ENCODE measurements at regions of chr1 and their contacts with region 1.

Region 1: DNA sequence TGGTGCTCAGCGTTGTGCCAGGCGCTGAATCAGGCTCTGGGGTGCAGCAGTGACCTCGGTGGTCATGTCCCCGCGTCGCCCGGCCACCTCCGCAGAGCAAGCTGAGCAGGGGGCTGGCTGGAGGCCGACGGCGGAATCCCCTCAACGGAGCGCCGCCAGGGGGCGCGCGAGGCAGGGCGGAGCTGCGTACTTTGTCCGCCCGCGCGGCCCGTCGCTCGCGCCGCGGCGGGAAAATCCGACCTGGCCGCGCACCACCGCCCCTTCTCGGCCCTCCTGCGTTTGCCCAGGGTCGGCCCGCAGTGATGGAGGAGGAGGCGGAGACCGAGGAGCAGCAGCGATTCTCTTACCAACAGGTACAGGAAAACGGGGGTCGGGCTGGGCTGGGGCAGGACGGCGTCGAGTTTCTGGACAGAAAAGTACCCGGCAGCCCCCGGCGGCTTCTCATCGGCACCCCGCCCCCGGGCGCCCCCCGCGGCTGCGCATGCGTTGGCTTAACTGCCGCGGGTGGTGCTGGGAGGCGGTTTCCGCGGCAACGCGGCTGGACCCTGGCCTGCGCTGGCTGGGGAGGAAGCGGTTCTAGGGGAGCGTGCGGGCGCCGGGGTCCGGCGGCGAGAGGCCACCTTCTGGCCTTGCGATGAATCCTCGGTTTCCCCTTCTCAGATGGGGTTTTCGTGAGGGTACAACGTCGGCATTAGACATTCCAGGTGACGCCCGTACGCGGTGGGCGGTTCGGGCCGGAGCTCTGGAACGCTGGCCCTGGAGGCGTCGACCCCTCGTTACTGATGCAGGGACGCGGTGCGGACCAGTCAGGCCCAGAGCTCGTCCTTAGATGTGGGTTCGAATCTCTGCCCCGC is at the start of gene CENPS:
- DNase-seq: peak; percentile 68 to 96 (median 91)
- ATAC-seq: peak; percentile 93
- H3K4me3 ChIP-seq: peak within 1 kb of the TSS; percentile 97
- H3K4me3 Mint-ChIP-seq: peak within 1 kb of the TSS; percentile 82 to 98 (median 88)
- H3K27ac ChIP-seq: peak within 1 kb of the TSS; percentile 88
- H3K27ac Mint-ChIP-seq: peak within 1 kb of the TSS; percentile 66 to 96 (median 92)
- H3K4me1 ChIP-seq: peaks cover 3 to 8% of the 10 kb centered on the region in 2 donors
- H3K4me1 Mint-ChIP-seq: peaks cover 0 to 26% (median 20%) of the 10 kb centered on the region in 7 donors
- H3K27me3 ChIP-seq: no peaks in the 10 kb centered on the region
- H3K27me3 Mint-ChIP-seq: peaks cover 0 to 2% (median 0%) of the 10 kb centered on the region in 5 donors
- total RNA-seq, gene CENPS: 5.4 to 13.0 (median 9.8) TPM

Region 2: GRCh38 chr1:9874959-9875635 is 555.3 kb before region 1 on chr1:
- CTCF ChIA-PET with region 1: interaction called, 13 read pairs
- POLR2A ChIA-PET with region 1: no interaction called
- intact Hi-C with region 1: loop called (anchors 1 kb)
- DNase-seq: peak; percentile 54 to 73 (median 64)
- ATAC-seq: peak; percentile 93
- H3K4me3 ChIP-seq: no peak overlapping the region
- H3K4me3 Mint-ChIP-seq: peak overlapping the region in 1 of 10 donors; percentile 14
- H3K27ac ChIP-seq: no peak overlapping the region
- H3K27ac Mint-ChIP-seq: peak overlapping the region in 3 of 9 donors; percentile 16 to 23 (median 16)
- H3K4me1 ChIP-seq: no peaks in the 10 kb centered on the region
- H3K4me1 Mint-ChIP-seq: peaks cover 6 to 9% (median 7%) of the 10 kb centered on the region in 7 donors
- H3K27me3 ChIP-seq: no peaks in the 10 kb centered on the region
- H3K27me3 Mint-ChIP-seq: no peaks in the 10 kb centered on the region

Region 3: GRCh38 chr1:9942939-9943788 is 487.3 kb before region 1 on chr1 and contains the starts of genes LZIC and NMNAT1:
- CTCF ChIA-PET with region 1: interaction called, 3 read pairs
- POLR2A ChIA-PET with region 1: no interaction called
- intact Hi-C with region 1: loop called in 1 of 2 experiments (anchors 1 kb)
- DNase-seq: peak; percentile 71 to 92 (median 82)
- ATAC-seq: peak; percentile 98
- H3K4me3 ChIP-seq: peak within 1 kb of the TSS; percentile 71
- H3K4me3 Mint-ChIP-seq: peak within 1 kb of the TSS; percentile 91 to 98 (median 97)
- H3K27ac ChIP-seq: peak within 1 kb of the TSS; percentile 92
- H3K27ac Mint-ChIP-seq: peak within 1 kb of the TSS; percentile 93 to 99 (median 97)
- H3K4me1 ChIP-seq: peaks cover 0 to 9% of the 10 kb centered on the region in 2 donors
- H3K4me1 Mint-ChIP-seq: peaks cover 17 to 33% (median 26%) of the 10 kb centered on the region in 7 donors
- H3K27me3 ChIP-seq: no peaks in the 10 kb centered on the region
- H3K27me3 Mint-ChIP-seq: no peaks in the 10 kb centered on the region
- total RNA-seq, gene LZIC: 18.0 to 35.1 (median 31.0) TPM
- total RNA-seq, gene NMNAT1: 2.7 to 8.3 (median 7.5) TPM

Region 4: DNA sequence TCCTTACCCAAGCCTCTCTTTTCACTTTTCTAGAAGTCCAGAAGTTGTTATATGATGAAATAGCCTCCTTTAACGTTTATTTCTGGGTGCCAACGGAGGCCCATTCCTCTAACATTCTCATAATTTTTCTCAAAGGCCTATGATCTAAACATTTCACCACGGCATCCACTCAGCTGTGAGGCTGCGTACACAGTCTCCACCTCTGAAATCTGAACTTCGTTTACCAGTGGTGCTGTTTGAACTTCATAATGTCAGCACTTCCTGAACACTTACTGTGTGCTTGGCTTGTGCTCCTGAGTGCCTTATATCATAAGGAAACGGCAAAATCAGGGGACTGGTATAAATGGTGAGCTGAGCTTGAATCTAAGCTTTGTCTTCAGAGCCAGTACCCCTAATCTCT is 445.4 kb before region 1 on chr1:
- CTCF ChIA-PET with region 1: no interaction called
- POLR2A ChIA-PET with region 1: no interaction called
- intact Hi-C with region 1: no loop called
- DNase-seq: no peak
- ATAC-seq: no peak
- H3K4me3 ChIP-seq: no peak overlapping the region
- H3K4me3 Mint-ChIP-seq: no peak overlapping the region
- H3K27ac ChIP-seq: no peak overlapping the region
- H3K27ac Mint-ChIP-seq: no peak overlapping the region
- H3K4me1 ChIP-seq: no peaks in the 10 kb centered on the region
- H3K4me1 Mint-ChIP-seq: no peaks in the 10 kb centered on the region
- H3K27me3 ChIP-seq: no peaks in the 10 kb centered on the region
- H3K27me3 Mint-ChIP-seq: no peaks in the 10 kb centered on the region

Region 5: DNA sequence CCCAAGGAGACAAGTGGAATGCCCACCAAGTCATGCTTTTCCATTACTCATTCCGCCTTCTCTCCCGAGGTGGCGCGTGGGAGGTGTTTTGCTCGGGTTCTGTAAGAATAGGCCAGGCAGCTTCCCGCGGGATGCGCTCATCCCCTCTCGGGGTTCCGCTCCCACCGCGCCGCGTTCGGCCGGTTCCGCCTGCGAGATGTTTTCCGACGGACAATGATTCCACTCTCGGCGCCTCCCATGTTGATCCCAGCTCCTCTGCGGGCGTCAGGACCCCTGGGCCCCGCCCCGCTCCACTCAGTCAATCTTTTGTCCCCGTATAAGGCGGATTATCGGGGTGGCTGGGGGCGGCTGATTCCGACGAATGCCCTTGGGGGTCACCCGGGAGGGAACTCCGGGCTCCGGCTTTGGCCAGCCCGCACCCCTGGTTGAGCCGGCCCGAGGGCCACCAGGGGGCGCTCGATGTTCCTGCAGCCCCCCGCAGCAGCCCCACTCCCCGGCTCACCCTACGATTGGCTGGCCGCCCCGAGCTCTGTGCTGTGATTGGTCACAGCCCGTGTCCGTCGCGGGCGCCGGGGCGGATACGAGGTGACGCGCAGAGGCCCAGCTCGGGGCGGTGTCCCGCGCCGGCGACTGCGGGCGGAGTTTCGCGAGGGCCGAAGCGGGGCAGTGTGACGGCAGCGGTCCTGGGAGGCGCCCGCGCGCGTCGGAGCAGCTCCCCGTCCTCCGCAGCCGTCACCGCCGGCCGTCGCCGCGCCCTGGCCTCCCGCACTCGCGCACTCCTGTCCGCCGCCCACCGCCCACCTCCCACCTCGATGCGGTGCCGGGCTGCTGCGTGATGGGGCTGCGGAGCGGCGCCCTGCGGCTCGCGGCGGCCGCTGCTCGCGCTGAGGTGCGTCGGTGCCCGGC is 220.3 kb before region 1 on chr1 and contains the start of gene KIF1B:
- CTCF ChIA-PET with region 1: interaction called, 26 read pairs
- POLR2A ChIA-PET with region 1: interaction called, 10 read pairs
- intact Hi-C with region 1: loop called (anchors 1 kb)
- DNase-seq: peak; percentile 93 to 98 (median 95)
- ATAC-seq: peak; percentile 99
- H3K4me3 ChIP-seq: peak within 1 kb of the TSS; percentile 94
- H3K4me3 Mint-ChIP-seq: peak within 1 kb of the TSS; percentile 83 to 93 (median 90)
- H3K27ac ChIP-seq: peak within 1 kb of the TSS; percentile 75
- H3K27ac Mint-ChIP-seq: peak within 1 kb of the TSS; percentile 51 to 82 (median 67)
- H3K4me1 ChIP-seq: peaks cover 5 to 15% of the 10 kb centered on the region in 2 donors
- H3K4me1 Mint-ChIP-seq: peaks cover 14 to 37% (median 21%) of the 10 kb centered on the region in 7 donors
- H3K27me3 ChIP-seq: peaks cover 0 to 4% of the 10 kb centered on the region in 2 donors
- H3K27me3 Mint-ChIP-seq: peaks cover 0 to 8% (median 0%) of the 10 kb centered on the region in 5 donors
- total RNA-seq, gene KIF1B: 10.4 to 21.6 (median 13.4) TPM

Region 6: GRCh38 chr1:10378081-10378841 is 52.2 kb before region 1 on chr1:
- CTCF ChIA-PET with region 1: interaction called, 10 read pairs
- POLR2A ChIA-PET with region 1: no interaction called
- intact Hi-C with region 1: loop called in 1 of 2 experiments (anchors 1 kb)
- DNase-seq: no peak
- ATAC-seq: peak; percentile 83
- H3K4me3 ChIP-seq: no peak overlapping the region
- H3K4me3 Mint-ChIP-seq: no peak overlapping the region
- H3K27ac ChIP-seq: no peak overlapping the region
- H3K27ac Mint-ChIP-seq: peak overlapping the region in 1 of 9 donors; percentile 13
- H3K4me1 ChIP-seq: no peaks in the 10 kb centered on the region
- H3K4me1 Mint-ChIP-seq: peaks cover 0 to 5% (median 0%) of the 10 kb centered on the region in 7 donors
- H3K27me3 ChIP-seq: no peaks in the 10 kb centered on the region
- H3K27me3 Mint-ChIP-seq: no peaks in the 10 kb centered on the region

Region 7: DNA sequence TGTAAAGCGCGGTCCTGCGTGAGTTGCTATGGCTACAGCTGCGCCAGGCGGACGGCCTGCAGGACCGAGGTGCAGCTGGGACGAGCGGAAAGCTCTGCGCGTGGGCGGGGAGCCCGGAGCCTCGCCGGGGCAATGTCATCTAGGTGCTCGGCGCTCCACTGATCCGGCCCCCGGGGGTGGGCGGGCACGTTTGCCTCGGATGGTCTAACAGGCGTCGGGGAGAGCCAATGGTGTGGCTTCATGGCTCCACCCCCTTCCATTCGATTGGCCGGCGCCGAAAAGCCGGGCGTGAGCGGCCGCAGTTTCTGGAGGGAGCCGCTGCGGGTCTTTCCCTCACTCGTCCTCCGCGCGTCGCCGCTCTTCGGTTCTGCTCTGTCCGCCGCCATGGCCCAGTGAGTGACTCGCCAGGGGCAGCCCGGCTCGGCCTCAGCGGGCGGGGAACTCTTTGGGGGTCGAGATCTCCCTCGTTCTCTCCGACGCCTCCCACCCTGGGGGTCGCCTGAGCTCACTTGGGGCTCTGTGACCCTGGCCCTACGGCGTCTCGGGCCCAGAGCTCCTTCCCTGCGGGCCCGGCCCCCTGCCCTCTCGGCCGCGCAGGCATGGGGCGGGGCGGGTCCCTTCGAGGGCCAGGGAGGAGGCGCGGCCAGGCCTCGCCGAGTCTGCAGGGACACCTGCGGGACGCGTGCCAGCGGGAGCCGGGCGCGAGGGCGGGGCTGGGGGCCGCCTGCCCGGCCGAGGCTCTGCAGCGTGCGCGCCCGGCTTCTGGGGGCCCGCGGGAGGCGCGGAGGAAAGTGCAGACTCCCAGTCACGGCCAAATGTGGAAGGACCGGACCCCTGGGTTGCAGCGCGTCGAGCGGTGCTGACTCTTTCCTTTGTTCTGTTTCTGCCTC is 31.5 kb before region 1 on chr1 and contains the start of gene PGD:
- CTCF ChIA-PET with region 1: interaction called, 4 read pairs
- POLR2A ChIA-PET with region 1: interaction called, 4 read pairs
- intact Hi-C with region 1: loop called (anchors 1 kb)
- DNase-seq: peak; percentile 87 to 98 (median 94)
- ATAC-seq: peak; percentile 99
- H3K4me3 ChIP-seq: peak within 1 kb of the TSS; percentile 95
- H3K4me3 Mint-ChIP-seq: peak within 1 kb of the TSS; percentile 87 to 97 (median 96)
- H3K27ac ChIP-seq: peak within 1 kb of the TSS; percentile 86
- H3K27ac Mint-ChIP-seq: peak within 1 kb of the TSS; percentile 63 to 94 (median 82)
- H3K4me1 ChIP-seq: peaks cover 4 to 7% of the 10 kb centered on the region in 2 donors
- H3K4me1 Mint-ChIP-seq: peaks cover 10 to 30% (median 25%) of the 10 kb centered on the region in 7 donors
- H3K27me3 ChIP-seq: no peaks in the 10 kb centered on the region
- H3K27me3 Mint-ChIP-seq: no peaks in the 10 kb centered on the region
- total RNA-seq, gene PGD: 42.0 to 110 (median 48.5) TPM

Region 8: GRCh38 chr1:10867138-10867721 is 436.8 kb after region 1 on chr1:
- CTCF ChIA-PET with region 1: interaction called, 3 read pairs
- POLR2A ChIA-PET with region 1: no interaction called
- intact Hi-C with region 1: loop called in 1 of 2 experiments (anchors 5 kb)
- DNase-seq: peak; percentile 36 to 79 (median 61)
- ATAC-seq: peak; percentile 93
- H3K4me3 ChIP-seq: peak overlapping the region; percentile 33
- H3K4me3 Mint-ChIP-seq: peak overlapping the region in 8 of 10 donors; percentile 43 to 81 (median 60)
- H3K27ac ChIP-seq: no peak overlapping the region
- H3K27ac Mint-ChIP-seq: peak overlapping the region in 1 of 9 donors; percentile 32
- H3K4me1 ChIP-seq: peaks cover 0 to 7% of the 10 kb centered on the region in 2 donors
- H3K4me1 Mint-ChIP-seq: peaks cover 8 to 32% (median 15%) of the 10 kb centered on the region in 7 donors
- H3K27me3 ChIP-seq: peaks cover 0 to 15% of the 10 kb centered on the region in 2 donors
- H3K27me3 Mint-ChIP-seq: peaks cover 51 to 74% (median 56%) of the 10 kb centered on the region in 5 donors

Measured in naive thymus-derived CD4-positive, alpha-beta T cell (primary cell).